ENCODE measurements at regions of chr11 and their contacts with region 1.

Region 1: GRCh38 chr11:19756675-19757475 is 44.2 kb downstream of the NAV2 start:
- DNase-seq: peak in 1 of 2 donors; percentile 38
- ATAC-seq: peak; percentile 54 to 95 (median 91)
- H3K4me3 ChIP-seq: no peak overlapping the region
- H3K27ac ChIP-seq: peak overlapping the region; percentile 19 to 78 (median 63)
- H3K4me1 ChIP-seq: peaks cover 3 to 56% (median 9%) of the 10 kb centered on the region in 9 donors
- H3K27me3 ChIP-seq: no peaks in the 10 kb centered on the region
- CTCF ChIP-seq: no peak

Region 2: DNA sequence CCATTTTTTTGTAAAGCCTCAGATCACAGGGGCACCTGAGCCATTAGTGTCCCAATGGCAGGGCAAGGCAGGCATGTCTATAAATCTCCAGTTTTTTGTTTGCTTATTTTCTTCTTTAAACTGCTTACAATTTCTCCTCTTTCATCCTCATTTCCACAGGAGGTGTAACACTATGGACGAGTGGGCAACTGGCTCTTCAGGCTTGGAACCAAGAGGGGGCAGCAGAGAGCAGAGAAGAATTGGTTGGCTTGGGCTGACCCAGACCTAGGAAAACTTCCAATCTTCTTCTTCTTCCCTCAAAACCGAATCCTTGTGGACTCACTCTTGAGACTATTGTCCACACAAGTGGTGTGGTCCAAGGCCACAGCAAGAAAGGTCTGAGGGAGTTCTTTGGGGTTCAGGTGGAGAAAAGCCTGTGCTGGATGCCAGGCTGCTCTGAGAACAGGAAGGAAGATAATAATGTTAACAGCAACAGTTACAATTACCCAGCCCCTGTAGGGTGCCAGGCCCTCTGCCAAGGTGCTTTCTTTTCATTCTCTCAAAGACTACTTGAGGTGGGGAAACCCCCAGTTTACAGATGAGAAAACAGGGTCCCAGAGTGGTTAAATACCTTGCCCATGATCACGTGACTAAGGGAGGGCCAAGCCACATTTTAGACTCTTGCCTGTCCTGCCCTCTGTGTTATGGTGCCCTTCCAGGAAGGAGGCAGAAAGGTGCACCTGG is 445.4 kb before region 1 on chr11:
- intact Hi-C with region 1: loop called in 1 of 10 experiments (anchors 10 kb)
- DNase-seq: peak; percentile 53 to 71
- ATAC-seq: peak; percentile 83 to 91 (median 86)
- H3K4me3 ChIP-seq: no peak overlapping the region
- H3K27ac ChIP-seq: no peak overlapping the region
- H3K4me1 ChIP-seq: peaks cover 0 to 5% (median 0%) of the 10 kb centered on the region in 9 donors
- H3K27me3 ChIP-seq: peaks cover 0 to 8% (median 0%) of the 10 kb centered on the region in 7 donors
- CTCF ChIP-seq: peak; percentile 60 to 89 (median 83)

Region 3: DNA sequence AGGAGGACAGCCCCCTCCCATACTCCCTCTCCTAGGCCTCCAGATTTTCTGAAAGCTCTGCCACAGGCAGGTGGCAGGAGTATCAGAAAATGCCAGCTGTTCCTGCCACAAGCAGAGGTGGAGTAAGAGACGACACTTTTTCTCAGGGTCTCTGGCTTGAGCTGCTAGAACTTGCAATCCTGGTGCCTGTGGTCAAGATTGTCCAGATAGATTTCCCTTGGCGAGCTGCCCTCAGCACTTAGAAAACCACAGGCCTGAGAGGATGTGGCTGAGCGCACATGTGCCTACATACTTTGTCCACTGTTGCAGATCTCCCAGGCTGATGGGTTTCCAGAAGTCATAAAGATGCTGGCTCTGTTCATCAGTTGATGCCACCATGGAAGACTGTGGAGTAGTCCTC is 110.0 kb before region 1 on chr11:
- intact Hi-C with region 1: no loop called
- DNase-seq: no peak
- ATAC-seq: no peak
- H3K4me3 ChIP-seq: no peak overlapping the region
- H3K27ac ChIP-seq: no peak overlapping the region
- H3K4me1 ChIP-seq: peaks cover 0 to 23% (median 11%) of the 10 kb centered on the region in 9 donors
- H3K27me3 ChIP-seq: no peaks in the 10 kb centered on the region
- CTCF ChIP-seq: no peak

Region 4: GRCh38 chr11:19790831-19791552 is 34.1 kb after region 1 on chr11:
- intact Hi-C with region 1: loop called in 1 of 10 experiments (anchors 5 kb)
- DNase-seq: no peak
- ATAC-seq: peak in 1 of 8 donors; percentile 6
- H3K4me3 ChIP-seq: no peak overlapping the region
- H3K27ac ChIP-seq: no peak overlapping the region
- H3K4me1 ChIP-seq: peaks cover 0 to 69% (median 39%) of the 10 kb centered on the region in 9 donors
- H3K27me3 ChIP-seq: no peaks in the 10 kb centered on the region
- CTCF ChIP-seq: no peak

Region 5: GRCh38 chr11:19895776-19896175 is 138.9 kb after region 1 on chr11:
- intact Hi-C with region 1: loop called in 2 of 10 experiments (anchors 5 to 10 kb)
- DNase-seq: no peak
- ATAC-seq: no peak
- H3K4me3 ChIP-seq: no peak overlapping the region
- H3K27ac ChIP-seq: no peak overlapping the region
- H3K4me1 ChIP-seq: peaks cover 0 to 27% (median 3%) of the 10 kb centered on the region in 9 donors
- H3K27me3 ChIP-seq: no peaks in the 10 kb centered on the region
- CTCF ChIP-seq: no peak

Region 6: DNA sequence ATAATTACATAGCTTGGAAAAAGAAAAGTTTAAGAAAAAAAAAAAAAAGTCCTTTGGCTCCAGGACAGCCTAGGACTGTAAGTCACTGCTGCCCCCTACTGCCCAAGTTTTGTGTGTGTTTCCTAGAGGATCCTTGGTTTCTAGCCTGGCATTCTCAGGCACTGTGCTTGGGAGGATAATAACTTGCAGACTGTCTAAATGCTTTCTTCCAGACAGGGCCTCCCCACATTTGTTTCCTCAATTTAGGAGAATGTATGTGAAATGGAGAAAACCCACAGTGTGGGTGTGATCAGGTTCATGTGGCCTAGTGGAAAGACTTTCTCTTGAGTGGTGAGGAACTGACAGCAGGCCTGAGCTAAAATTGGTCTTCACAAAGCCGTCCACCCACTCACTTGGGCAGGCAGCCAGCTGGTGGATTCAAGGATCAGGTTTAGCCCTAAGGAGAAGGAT is 146.8 kb after region 1 on chr11:
- intact Hi-C with region 1: loop called in 2 of 10 experiments (anchors 5 to 10 kb)
- DNase-seq: peak; percentile 37 to 72
- ATAC-seq: peak; percentile 50 to 80 (median 67)
- H3K4me3 ChIP-seq: no peak overlapping the region
- H3K27ac ChIP-seq: no peak overlapping the region
- H3K4me1 ChIP-seq: peaks cover 0 to 20% (median 4%) of the 10 kb centered on the region in 9 donors
- H3K27me3 ChIP-seq: no peaks in the 10 kb centered on the region
- CTCF ChIP-seq: peak; percentile 62 to 87 (median 82)

Region 7: GRCh38 chr11:20647976-20648565 is 891.2 kb after region 1 on chr11:
- intact Hi-C with region 1: no loop called
- DNase-seq: peak in 1 of 2 donors; percentile 18
- ATAC-seq: peak in 4 of 8 donors; percentile 12 to 53 (median 47)
- H3K4me3 ChIP-seq: no peak overlapping the region
- H3K27ac ChIP-seq: no peak overlapping the region
- H3K4me1 ChIP-seq: no peaks in the 10 kb centered on the region
- H3K27me3 ChIP-seq: peaks cover 0 to 25% (median 12%) of the 10 kb centered on the region in 7 donors
- CTCF ChIP-seq: peak; percentile 64 to 92 (median 88)

Measured in heart right ventricle (tissue), 16 donors.